Activated T-helper 1 cell treated with anti-CD3 and anti-CD28 coated beads, Interleukin-12 subunit alpha, Interleukin-12 subunit beta, Interleukin-2, Interleukin-4 antibody, amounts not matched to agents 30 ng/mL and 10 ng/mL and 1 ng/mL, durations not matched to agents 14 hours and 24 hours and 36 hours (primary cell): ENCODE measurements at regions of chr21 and their contacts with region 1.

Region 1: GRCh38 chr21:37463083-37463801 is 96.7 kb downstream of the DYRK1A start:
- DNase-seq: peak; percentile 14
- H3K4me3 Mint-ChIP-seq: no peak overlapping the region
- H3K27ac Mint-ChIP-seq: peak overlapping the region; percentile 21
- H3K4me1 Mint-ChIP-seq: peaks cover 56% of the 10 kb centered on the region
- H3K27me3 Mint-ChIP-seq: no peaks in the 10 kb centered on the region

Region 2: DNA sequence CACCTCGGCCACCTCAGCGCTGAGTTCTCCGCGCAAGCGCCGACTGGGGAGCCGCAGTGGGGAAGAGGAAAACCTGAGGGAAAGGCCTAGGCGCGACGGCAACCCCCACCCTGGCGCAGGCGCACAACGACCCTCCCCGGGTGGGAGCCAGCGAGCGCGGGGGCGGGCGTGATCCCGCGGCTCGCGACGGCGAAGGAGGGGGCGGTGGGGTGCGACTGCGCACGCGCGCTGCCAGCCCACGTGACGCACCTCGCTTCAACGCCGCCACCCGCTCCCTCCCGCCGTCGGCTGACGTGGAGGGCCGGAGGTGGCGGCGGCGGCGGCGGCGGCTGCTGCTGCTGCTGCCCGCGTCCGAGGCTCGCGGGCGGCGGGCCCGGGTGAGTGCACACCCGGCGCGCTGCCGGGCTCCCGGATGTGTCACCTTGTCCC is 390.2 kb before region 1 on chr21 and contains the starts of genes PIGP and TTC3:
- intact Hi-C with region 1: loop called (anchors 10 kb)
- DNase-seq: peak; percentile 93
- H3K4me3 Mint-ChIP-seq: peak within 1 kb of the TSS; percentile 95
- H3K27ac Mint-ChIP-seq: peak within 1 kb of the TSS; percentile 95
- H3K4me1 Mint-ChIP-seq: peaks cover 50% of the 10 kb centered on the region
- H3K27me3 Mint-ChIP-seq: peaks cover 2% of the 10 kb centered on the region
- total RNA-seq, gene PIGP: 18.2 and 20.1 TPM in 2 replicates
- total RNA-seq, gene TTC3: 61.8 and 69.3 TPM in 2 replicates

Region 3: GRCh38 chr21:37407719-37408420 is 55.4 kb before region 1 on chr21:
- intact Hi-C with region 1: loop called (anchors 2 kb)
- DNase-seq: no peak
- H3K4me3 Mint-ChIP-seq: no peak overlapping the region
- H3K27ac Mint-ChIP-seq: peak overlapping the region; percentile 79
- H3K4me1 Mint-ChIP-seq: peaks cover 74% of the 10 kb centered on the region
- H3K27me3 Mint-ChIP-seq: no peaks in the 10 kb centered on the region

Region 4: GRCh38 chr21:37475186-37475868 is 12.1 kb after region 1 on chr21:
- intact Hi-C with region 1: loop called (anchors 1 kb)
- DNase-seq: no peak
- H3K4me3 Mint-ChIP-seq: no peak overlapping the region
- H3K27ac Mint-ChIP-seq: peak overlapping the region; percentile 52
- H3K4me1 Mint-ChIP-seq: peaks cover 56% of the 10 kb centered on the region
- H3K27me3 Mint-ChIP-seq: no peaks in the 10 kb centered on the region